PC-3 (cell line): ENCODE measurements at regions of chr6 and their contacts with region 1.

Region 1: GRCh38 chr6:154457881-154458284 is 52.6 kb downstream of the CNKSR3 start:
- DNase-seq: peak; percentile 64
- ATAC-seq: peak; percentile 97
- H3K4me3 ChIP-seq: no peak overlapping the region
- H3K27ac ChIP-seq: no peak overlapping the region
- H3K4me1 ChIP-seq: peaks cover 17% of the 10 kb centered on the region
- H3K27me3 ChIP-seq: no peaks in the 10 kb centered on the region
- CTCF ChIP-seq: peak; percentile 52

Region 2: GRCh38 chr6:154169193-154169847 is 288.6 kb before region 1 on chr6:
- CTCF ChIA-PET with region 1: no interaction called
- POLR2A ChIA-PET with region 1: no interaction called
- intact Hi-C with region 1: no loop called
- DNase-seq: no peak
- ATAC-seq: no peak
- H3K4me3 ChIP-seq: no peak overlapping the region
- H3K27ac ChIP-seq: no peak overlapping the region
- H3K4me1 ChIP-seq: no peaks in the 10 kb centered on the region
- H3K27me3 ChIP-seq: no peaks in the 10 kb centered on the region
- CTCF ChIP-seq: no peak

Region 3: DNA sequence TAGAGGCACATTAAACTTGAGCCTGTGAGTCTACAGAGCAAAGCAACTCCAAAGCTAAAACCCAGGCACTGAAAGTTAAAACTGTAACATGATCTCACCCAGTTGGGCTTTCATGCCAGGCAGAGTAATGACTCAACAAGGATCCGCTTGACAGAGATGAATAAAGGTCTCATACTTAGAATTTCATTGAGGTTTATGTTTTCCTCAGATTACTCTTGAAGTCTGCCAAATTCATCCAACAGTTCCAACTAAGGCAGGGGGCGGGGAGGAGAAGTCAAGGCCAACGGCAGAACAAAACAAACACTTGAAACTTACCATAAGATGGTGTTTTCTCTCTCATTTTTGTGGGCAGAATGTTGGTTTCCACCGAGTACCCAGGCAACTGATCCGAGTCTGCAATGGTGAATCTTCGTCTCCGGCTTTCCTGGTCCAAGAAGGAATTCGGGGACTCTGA is 47.2 kb before region 1 on chr6:
- CTCF ChIA-PET with region 1: no interaction called
- POLR2A ChIA-PET with region 1: no interaction called
- intact Hi-C with region 1: loop called (anchors 1 kb)
- DNase-seq: peak; percentile 90
- ATAC-seq: peak; percentile 91
- H3K4me3 ChIP-seq: peak overlapping the region; percentile 47; the same call in 1 of the 2 replicates
- H3K27ac ChIP-seq: peak overlapping the region; percentile 81
- H3K4me1 ChIP-seq: peaks cover 20% of the 10 kb centered on the region
- H3K27me3 ChIP-seq: no peaks in the 10 kb centered on the region
- CTCF ChIP-seq: no peak

Region 4: GRCh38 chr6:154515826-154516225 is 57.9 kb after region 1 on chr6:
- CTCF ChIA-PET with region 1: no interaction called
- POLR2A ChIA-PET with region 1: no interaction called
- intact Hi-C with region 1: no loop called
- DNase-seq: no peak
- ATAC-seq: no peak
- H3K4me3 ChIP-seq: no peak overlapping the region
- H3K27ac ChIP-seq: no peak overlapping the region
- H3K4me1 ChIP-seq: peaks cover 7% of the 10 kb centered on the region; the same call in 1 of the 2 replicates
- H3K27me3 ChIP-seq: no peaks in the 10 kb centered on the region
- CTCF ChIP-seq: no peak